K562 (cell line): ENCODE measurements at regions of chr6 and their contacts with region 1.

Region 1: GRCh38 chr6:136403166-136403980 is 113.7 kb upstream of the BCLAF1 start:
- DNase-seq: peak; percentile 44 to 91 (median 62)
- ATAC-seq: peak; percentile 88
- H3K4me3 ChIP-seq: no peak overlapping the region
- H3K27ac ChIP-seq: peak overlapping the region; percentile 75
- H3K4me1 ChIP-seq: peaks cover 4 to 40% of the 10 kb centered on the region in 2 experiments
- H3K27me3 ChIP-seq: no peaks in the 10 kb centered on the region
- CTCF ChIP-seq: no peak
- EP300 ChIP-seq: peak; percentile 94
- POLR2A ChIP-seq: no peak
- RAD21 ChIP-seq: peak; percentile 19 to 27; a peak in 1 of 4 replicates

Region 2: GRCh38 chr6:136429264-136430065 is 26.1 kb after region 1 on chr6:
- CTCF ChIA-PET with region 1: no interaction called
- POLR2A ChIA-PET with region 1: interaction called, 14 read pairs
- in situ Hi-C with region 1: no loop called
- intact Hi-C with region 1: no loop called
- DNase-seq: peak in 1 of 4 experiments; percentile 44
- ATAC-seq: peak; percentile 42; the same call in 2 of the 3 replicates
- H3K4me3 ChIP-seq: no peak overlapping the region
- H3K27ac ChIP-seq: no peak overlapping the region
- H3K4me1 ChIP-seq: peaks cover 0 to 40% of the 10 kb centered on the region in 2 experiments; a peak in 4 of 5 replicates
- H3K27me3 ChIP-seq: peaks cover 0 to 4% of the 10 kb centered on the region in 2 experiments; a peak in 2 of 5 replicates
- CTCF ChIP-seq: no peak
- EP300 ChIP-seq: no peak
- POLR2A ChIP-seq: no peak
- RAD21 ChIP-seq: peak; percentile 46 to 72